Vagina (tissue), 2 donors: ENCODE measurements at regions of chr22 and their contacts with region 1.

Region 1: DNA sequence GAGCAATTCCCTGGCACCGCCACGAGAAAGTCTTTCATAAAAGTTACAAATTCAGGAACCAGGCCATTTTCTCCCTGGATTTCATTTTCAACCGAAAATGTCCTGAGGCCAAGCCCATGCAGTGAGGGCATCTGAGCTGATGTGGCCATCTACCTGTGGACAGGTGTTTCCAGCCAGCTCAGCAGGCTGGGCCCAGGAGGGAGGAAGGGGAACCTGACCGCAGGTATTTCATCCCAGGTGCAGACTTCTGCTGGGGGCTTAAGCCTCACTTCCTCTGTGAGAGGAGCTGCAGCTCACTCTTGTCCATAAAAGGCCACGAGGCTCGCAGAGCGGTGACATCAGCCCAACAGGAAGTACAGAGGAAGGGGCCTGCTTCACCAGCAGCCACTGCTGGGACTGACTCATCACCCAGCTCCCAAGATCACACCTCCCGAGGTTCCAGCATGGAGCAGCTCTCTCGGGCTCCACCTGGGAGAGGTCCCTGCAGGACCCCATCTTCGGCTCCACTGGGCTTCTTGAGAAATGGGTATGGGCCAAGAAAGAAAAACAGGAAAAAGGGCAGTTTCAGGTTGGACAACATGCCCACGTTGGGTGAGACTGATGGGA is 56.4 kb downstream of the MYH9 start:
- DNase-seq: peak in 1 of 2 donors; percentile 96
- H3K4me3 ChIP-seq: peak overlapping the region in 1 of 2 donors; percentile 17
- H3K27ac ChIP-seq: peak overlapping the region; percentile 97
- H3K4me1 ChIP-seq: peaks cover 99% of the 10 kb centered on the region
- H3K27me3 ChIP-seq: no peaks in the 10 kb centered on the region
- CTCF ChIP-seq: no peak
- POLR2A ChIP-seq: peak in 1 of 2 donors; percentile 26

Region 2: GRCh38 chr22:36048911-36049677 is 282.3 kb before region 1 on chr22:
- intact Hi-C with region 1: no loop called
- DNase-seq: no peak
- H3K4me3 ChIP-seq: no peak overlapping the region
- H3K27ac ChIP-seq: no peak overlapping the region
- H3K4me1 ChIP-seq: no peaks in the 10 kb centered on the region
- H3K27me3 ChIP-seq: no peaks in the 10 kb centered on the region
- CTCF ChIP-seq: no peak
- POLR2A ChIP-seq: no peak

Region 3: GRCh38 chr22:36365020-36365411 is 33.6 kb after region 1 on chr22:
- intact Hi-C with region 1: loop called (anchors 5 kb)
- DNase-seq: no peak
- H3K4me3 ChIP-seq: no peak overlapping the region
- H3K27ac ChIP-seq: peak overlapping the region; percentile 93
- H3K4me1 ChIP-seq: peaks cover 100% of the 10 kb centered on the region
- H3K27me3 ChIP-seq: no peaks in the 10 kb centered on the region
- CTCF ChIP-seq: no peak
- POLR2A ChIP-seq: no peak